ENCODE measurements at regions of chr17 and their contacts with region 1.

Region 1: DNA sequence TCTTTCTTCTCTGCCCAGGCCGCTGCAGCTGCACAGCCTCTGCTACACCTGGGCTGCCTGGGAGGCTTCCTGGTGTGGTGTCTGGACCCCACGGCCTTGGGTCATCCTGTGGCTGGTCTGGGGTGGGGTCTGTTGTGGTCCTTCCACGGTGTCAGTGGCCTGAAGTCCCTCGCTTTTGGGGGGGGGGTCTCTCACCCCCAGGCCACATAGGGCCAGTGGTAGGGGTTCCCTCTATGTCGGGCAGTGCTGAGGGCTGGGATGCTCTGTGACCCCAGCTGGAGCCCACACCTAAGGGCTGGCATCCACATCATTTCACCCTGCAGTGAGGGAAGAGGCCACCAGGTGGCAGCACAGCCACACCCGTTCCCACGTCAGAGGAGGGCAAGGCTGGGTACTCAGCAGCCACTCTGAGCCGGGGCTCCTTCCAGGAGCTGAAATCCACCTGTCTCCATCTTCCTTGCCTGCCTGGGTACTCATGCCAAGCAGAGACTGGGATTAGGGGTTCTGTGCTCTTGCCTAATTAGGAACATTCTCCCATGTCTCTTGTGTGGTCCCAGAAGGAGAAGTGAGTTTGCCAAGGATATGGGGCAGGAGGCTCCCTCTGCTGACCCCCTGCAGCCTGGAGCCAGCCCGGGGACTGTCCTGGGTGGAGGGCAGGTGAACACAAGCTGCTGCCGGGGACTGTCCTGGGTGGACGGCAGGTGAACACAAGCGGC is 13.0 kb downstream of the ENGASE start:
- H3K4me3 ChIP-seq: no peak overlapping the region
- H3K27ac ChIP-seq: no peak overlapping the region
- H3K4me1 ChIP-seq: no peaks in the 10 kb centered on the region
- CTCF ChIP-seq: peak; percentile 91

Region 2: GRCh38 chr17:79019632-79020584 is 67.7 kb before region 1 on chr17:
- CTCF ChIA-PET with region 1: interaction called, 26 read pairs
- POLR2A ChIA-PET with region 1: no interaction called
- H3K4me3 ChIP-seq: no peak overlapping the region
- H3K27ac ChIP-seq: peak overlapping the region; percentile 14; the same call in 1 of the 2 replicates
- H3K4me1 ChIP-seq: peaks cover 21% of the 10 kb centered on the region
- CTCF ChIP-seq: no peak

Region 3: GRCh38 chr17:79065105-79065670 is 22.4 kb before region 1 on chr17:
- CTCF ChIA-PET with region 1: interaction called, 34 read pairs
- POLR2A ChIA-PET with region 1: no interaction called
- H3K4me3 ChIP-seq: no peak overlapping the region
- H3K27ac ChIP-seq: no peak overlapping the region
- H3K4me1 ChIP-seq: no peaks in the 10 kb centered on the region
- CTCF ChIP-seq: no peak

Region 4: DNA sequence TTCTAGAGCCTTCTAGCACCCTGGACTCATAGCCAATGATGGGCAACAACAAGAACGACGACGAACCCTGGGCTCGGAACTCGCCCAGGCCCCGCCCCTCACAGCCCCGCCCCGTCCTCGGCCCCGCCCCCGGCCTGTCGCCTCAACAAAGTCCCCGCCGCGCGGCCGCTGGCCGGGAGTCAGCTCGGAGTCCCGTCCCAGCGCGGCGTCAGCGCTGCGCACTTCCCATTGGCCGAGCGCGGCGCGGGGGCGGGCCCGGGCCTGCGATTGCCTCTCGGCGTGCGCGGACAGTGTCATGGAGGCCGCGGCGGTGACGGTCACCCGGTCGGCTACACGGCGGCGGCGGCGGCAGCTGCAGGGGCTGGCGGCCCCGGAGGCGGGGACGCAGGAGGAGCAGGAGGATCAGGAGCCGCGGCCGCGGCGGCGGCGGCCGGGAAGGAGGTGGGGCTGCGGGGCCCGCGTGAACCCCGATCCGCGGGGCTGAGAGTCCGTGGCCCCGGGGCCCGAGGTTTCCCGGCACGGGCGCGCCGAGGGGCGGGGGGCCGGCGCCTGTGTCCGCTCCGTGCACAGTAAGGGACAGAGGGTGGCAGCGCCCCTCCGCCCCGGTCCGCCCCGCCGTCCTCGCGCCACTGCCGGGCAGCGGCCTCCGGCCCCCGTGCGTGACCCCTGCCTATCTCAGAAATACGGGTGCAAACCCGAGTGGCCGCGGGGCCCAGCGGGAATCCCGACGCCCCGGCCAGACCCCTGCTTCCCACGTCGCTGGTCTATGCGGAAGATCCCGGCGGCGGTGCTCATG is 12.7 kb before region 1 on chr17 and contains the start of gene ENGASE:
- CTCF ChIA-PET with region 1: interaction called, 21 read pairs
- POLR2A ChIA-PET with region 1: interaction called, 7 read pairs
- H3K4me3 ChIP-seq: peak within 1 kb of the TSS; percentile 68
- H3K27ac ChIP-seq: peak within 1 kb of the TSS; percentile 80; the same call in 1 of the 2 replicates
- H3K4me1 ChIP-seq: peaks cover 4% of the 10 kb centered on the region; the same call in 1 of the 2 replicates
- CTCF ChIP-seq: no peak

Region 5: DNA sequence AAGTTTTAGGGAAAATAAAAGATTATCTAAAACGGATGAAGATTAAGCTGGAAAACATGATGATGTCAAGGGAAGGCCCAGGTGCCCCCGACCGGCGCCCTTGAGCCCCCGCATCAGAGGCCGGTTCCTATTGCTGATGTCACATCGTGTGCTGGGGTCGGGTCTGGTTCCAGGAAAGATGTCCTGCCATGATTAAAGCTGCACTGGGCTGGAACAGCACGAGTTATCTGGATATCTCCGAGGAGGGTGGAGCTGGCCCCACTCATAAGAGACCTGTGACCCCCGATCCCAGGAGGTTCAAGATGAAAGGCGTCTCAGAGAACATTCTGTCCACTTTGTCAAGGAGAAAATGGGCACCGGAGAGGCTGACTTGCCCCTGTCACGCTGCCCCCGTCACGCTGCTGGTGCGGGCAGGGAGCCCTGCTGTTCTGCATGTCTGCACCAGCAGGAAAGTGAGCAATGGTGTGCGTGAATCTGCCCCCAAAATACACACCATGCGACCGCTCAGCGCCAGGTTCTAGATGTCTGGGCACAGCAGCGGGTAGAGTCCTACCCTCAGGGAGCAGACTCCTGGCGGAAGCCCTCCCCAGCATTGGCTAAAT is 40.0 kb after region 1 on chr17:
- CTCF ChIA-PET with region 1: interaction called, 13 read pairs
- POLR2A ChIA-PET with region 1: no interaction called
- H3K4me3 ChIP-seq: no peak overlapping the region
- H3K27ac ChIP-seq: no peak overlapping the region
- H3K4me1 ChIP-seq: no peaks in the 10 kb centered on the region
- CTCF ChIP-seq: no peak

Region 6: GRCh38 chr17:79188048-79188447 is 100.5 kb after region 1 on chr17:
- CTCF ChIA-PET with region 1: interaction called, 24 read pairs
- POLR2A ChIA-PET with region 1: no interaction called
- H3K4me3 ChIP-seq: no peak overlapping the region
- H3K27ac ChIP-seq: no peak overlapping the region
- H3K4me1 ChIP-seq: no peaks in the 10 kb centered on the region
- CTCF ChIP-seq: peak; percentile 84

Region 7: GRCh38 chr17:79400989-79401703 is 313.6 kb after region 1 on chr17:
- CTCF ChIA-PET with region 1: interaction called, 346 read pairs
- POLR2A ChIA-PET with region 1: no interaction called
- H3K4me3 ChIP-seq: peak overlapping the region; percentile 6; the same call in 1 of the 2 replicates
- H3K27ac ChIP-seq: no peak overlapping the region
- H3K4me1 ChIP-seq: no peaks in the 10 kb centered on the region
- CTCF ChIP-seq: peak; percentile 72

Measured in HEK293 (cell line).